ENCODE measurements at regions of chr1 and their contacts with region 1.

Region 1: DNA sequence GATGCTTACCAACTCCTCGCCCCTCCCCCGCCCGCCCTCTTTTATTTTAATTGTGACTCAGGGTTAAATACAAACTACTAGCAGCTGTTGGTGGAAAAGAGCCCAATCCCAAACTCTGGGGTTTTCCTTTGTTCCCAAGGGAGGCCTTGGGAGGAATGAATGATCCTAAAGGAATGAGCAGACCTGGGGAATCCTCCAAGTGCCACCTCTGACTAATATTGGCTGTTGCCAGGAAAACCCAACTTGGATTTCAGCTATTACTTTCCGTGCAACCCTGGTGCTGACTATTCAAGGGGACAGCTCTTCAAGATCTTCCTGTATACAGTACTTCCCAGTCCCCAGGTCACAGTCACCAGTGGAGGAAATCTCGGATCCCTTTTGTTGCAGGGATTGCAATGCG is 1.3 kb upstream of the S100A10 start:
- DNase-seq: peak; percentile 99
- H3K4me3 ChIP-seq: no peak overlapping the region
- H3K27ac ChIP-seq: peak overlapping the region; percentile 98
- H3K4me1 ChIP-seq: peaks cover 39% of the 10 kb centered on the region
- H3K27me3 ChIP-seq: no peaks in the 10 kb centered on the region

Region 2: DNA sequence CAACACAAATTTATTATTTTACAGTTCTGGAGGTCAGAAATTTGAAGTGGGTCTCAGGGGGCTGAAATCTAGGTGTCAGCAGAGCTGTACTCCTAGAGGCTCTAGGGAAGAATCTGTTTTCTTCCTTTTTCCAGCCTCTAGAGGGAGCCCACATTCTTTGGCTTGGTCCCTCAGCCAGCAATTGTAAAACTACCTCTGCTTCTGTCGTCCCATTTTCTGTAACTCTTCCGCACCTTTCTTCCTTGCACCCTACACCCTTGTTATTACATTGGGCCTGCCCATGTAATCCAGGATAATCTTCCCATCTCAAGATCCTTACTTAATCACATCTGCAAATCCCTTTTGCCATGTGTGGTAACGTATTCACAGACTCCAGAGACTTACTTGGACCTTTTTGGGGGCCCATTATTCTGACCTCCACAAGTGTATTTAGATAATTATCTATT is 60.9 kb before region 1 on chr1:
- in situ Hi-C with region 1: loop called (anchors 5 kb)
- DNase-seq: peak; percentile 74
- H3K4me3 ChIP-seq: no peak overlapping the region
- H3K27ac ChIP-seq: no peak overlapping the region
- H3K4me1 ChIP-seq: no peaks in the 10 kb centered on the region
- H3K27me3 ChIP-seq: no peaks in the 10 kb centered on the region

Measured in GM23248 (cell line).